Lower leg skin (tissue), 4 donors: ENCODE measurements at regions of chr2 and their contacts with region 1.

Region 1: GRCh38 chr2:46041434-46041833 is 255.8 kb upstream of the EPAS1 start:
- DNase-seq: no peak
- H3K4me3 ChIP-seq: no peak overlapping the region
- CTCF ChIP-seq: no peak
- POLR2A ChIP-seq: no peak

Region 2: DNA sequence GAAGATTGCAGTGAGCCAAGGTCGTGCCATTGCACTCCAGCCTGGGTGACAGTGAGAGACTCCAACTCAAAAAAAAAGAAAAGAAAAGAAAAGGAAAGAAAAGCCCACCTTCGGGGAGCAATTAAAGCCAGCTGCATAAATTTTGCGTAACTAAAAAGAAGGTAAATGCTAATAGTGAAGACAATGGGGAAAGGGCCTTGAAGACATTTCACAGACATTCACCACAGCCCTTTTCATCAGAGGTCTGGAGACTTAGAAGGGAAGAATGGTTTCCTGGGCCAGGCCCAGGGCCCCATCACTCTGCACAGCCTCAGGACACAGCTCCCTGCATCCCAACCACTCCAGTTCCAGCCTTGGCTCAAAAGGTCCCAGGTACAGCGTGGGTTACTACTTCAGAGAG is 1706.4 kb after region 1 on chr2:
- intact Hi-C with region 1: loop called (anchors 5 kb)
- DNase-seq: no peak
- H3K4me3 ChIP-seq: no peak overlapping the region
- CTCF ChIP-seq: no peak
- POLR2A ChIP-seq: no peak